Gastrocnemius medialis (tissue), 4 donors: ENCODE measurements at regions of chr11 and their contacts with region 1.

Region 1: DNA sequence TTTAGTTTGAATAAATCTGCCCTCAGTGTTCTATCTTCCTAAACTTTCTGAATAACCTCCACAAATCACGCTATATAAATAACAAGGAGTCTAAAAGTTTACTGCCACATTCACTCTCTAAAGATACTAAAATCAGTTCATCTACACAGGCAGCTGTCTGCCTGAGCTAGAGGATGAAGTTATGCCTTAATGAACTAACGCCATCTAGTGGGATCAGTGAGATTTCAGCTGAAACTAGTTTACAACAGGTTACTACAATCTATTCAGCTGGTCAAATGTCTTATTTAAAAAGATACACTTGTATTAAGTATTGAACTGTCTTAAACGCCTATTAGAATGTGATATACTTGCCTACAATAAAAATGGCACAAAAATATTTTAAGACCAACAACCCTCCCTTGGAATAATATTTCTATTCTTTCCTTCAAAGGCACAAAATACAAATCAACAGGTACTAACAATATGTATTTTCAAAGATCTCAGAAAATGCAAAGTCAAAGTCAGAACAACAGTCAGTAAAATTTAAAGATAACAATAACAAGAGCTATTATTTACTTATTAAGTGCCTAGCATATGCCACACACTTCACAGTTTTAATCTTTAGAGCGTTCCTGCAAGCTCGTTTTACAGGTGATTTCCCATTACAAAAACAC is 84.1 kb downstream of the LARGE2 start:
- DNase-seq: no peak
- ATAC-seq: peak; percentile 70 to 92
- H3K4me3 ChIP-seq: no peak overlapping the region
- H3K27ac ChIP-seq: no peak overlapping the region
- H3K4me1 ChIP-seq: peaks cover 9 to 11% of the 10 kb centered on the region in 2 donors
- H3K27me3 ChIP-seq: no peaks in the 10 kb centered on the region
- CTCF ChIP-seq: peak; percentile 33 to 82 (median 68)
- POLR2A ChIP-seq: no peak

Region 2: GRCh38 chr11:45872513-45873356 is 133.8 kb before region 1 on chr11:
- in situ Hi-C with region 1: no loop called
- intact Hi-C with region 1: loop called (anchors 5 kb)
- DNase-seq: peak in 1 of 2 donors; percentile 45
- ATAC-seq: peak; percentile 53 to 75
- H3K4me3 ChIP-seq: no peak overlapping the region
- H3K27ac ChIP-seq: no peak overlapping the region
- H3K4me1 ChIP-seq: no peaks in the 10 kb centered on the region
- H3K27me3 ChIP-seq: no peaks in the 10 kb centered on the region
- CTCF ChIP-seq: peak; percentile 39 to 66 (median 50)
- POLR2A ChIP-seq: no peak

Region 3: DNA sequence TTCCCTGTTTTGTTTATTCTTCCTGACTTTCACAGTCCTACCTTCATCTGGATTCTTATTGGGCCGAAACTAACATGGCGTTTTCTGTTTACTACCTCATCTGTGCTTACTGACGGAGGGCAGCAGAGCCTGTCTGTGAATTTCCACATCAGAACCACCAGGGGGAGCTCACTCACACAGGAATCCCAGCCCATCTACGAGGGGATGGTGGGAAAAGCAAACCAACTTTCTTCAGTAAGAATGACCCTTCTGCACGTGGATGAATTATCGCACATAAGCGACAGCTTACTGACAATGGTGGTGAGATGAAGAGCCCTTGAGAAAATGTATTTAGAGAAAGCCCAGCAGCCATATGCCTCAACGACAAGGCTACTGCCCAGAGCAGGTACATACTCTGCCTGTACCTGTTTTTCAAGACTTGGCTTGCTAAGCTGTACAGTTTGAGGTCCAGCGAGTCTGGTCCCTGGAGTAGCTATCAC is 41.6 kb before region 1 on chr11:
- in situ Hi-C with region 1: loop called in 3 of 4 experiments (anchors 5 kb)
- intact Hi-C with region 1: loop called (anchors 1 kb)
- DNase-seq: peak in 1 of 2 donors; percentile 52
- ATAC-seq: peak; percentile 90 to 92
- H3K4me3 ChIP-seq: no peak overlapping the region
- H3K27ac ChIP-seq: peak overlapping the region in 1 of 4 donors; percentile 19
- H3K4me1 ChIP-seq: peaks cover 0 to 12% of the 10 kb centered on the region in 2 donors
- H3K27me3 ChIP-seq: no peaks in the 10 kb centered on the region
- CTCF ChIP-seq: peak; percentile 74 to 87 (median 82)
- POLR2A ChIP-seq: no peak

Region 4: GRCh38 chr11:45974806-45975205 is 31.7 kb before region 1 on chr11:
- in situ Hi-C with region 1: loop called in 2 of 4 experiments (anchors 5 kb)
- intact Hi-C with region 1: no loop called
- DNase-seq: no peak
- ATAC-seq: no peak
- H3K4me3 ChIP-seq: no peak overlapping the region
- H3K27ac ChIP-seq: no peak overlapping the region
- H3K4me1 ChIP-seq: peaks cover 2 to 4% of the 10 kb centered on the region in 2 donors
- H3K27me3 ChIP-seq: no peaks in the 10 kb centered on the region
- CTCF ChIP-seq: no peak
- POLR2A ChIP-seq: no peak